IMR-90 (cell line): ENCODE measurements at regions of chr3 and their contacts with region 1.

Region 1: DNA sequence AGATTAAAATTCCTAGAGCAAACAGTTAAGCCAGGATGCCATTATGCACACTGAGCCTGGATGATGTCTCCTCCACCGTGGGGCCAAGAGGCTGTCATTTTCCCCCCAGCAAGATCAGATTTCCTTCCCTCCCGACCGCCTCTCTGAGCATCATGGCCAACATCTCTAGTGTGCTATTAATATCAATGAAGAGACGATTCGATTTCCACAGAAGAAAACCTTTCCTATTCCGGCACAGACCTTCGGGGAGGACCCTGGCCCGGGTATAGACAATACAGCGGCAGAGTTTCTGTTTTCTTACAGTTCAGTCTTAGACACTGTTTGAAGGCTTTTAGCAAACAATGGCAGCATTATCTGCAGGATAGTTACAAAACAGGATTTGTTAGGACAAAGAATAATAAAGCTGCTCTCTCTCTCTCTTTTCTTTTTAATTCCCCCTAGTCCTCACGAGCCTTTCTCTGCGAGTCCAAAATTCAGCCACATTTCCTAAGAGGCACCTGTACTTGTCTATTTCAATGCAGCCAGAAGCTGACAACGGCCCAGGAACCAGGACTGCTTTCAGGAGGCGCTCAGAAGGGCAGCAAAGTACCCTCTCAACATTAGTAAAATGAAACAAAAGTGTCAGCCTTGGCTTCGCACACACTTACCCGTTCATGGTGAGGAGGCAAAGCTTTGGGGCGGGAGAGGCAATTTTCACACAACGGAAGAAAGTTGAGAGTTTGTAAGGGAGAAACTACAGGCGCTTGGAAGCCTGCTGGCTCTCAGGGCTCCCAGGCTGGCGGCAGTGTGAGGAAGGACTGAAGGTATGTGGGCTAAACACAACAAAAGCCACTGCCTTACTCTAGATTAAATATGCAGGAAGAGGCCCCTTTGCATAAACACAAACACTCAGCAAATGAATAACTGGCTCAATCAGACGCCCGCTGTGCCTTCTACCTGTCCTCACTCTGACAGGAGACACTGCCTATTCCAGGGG is 278.0 kb downstream of the FOXP1 start:
- DNase-seq: peak; percentile 57
- ATAC-seq: peak; percentile 71
- H3K4me3 ChIP-seq: peak overlapping the region; percentile 28
- H3K27ac ChIP-seq: peak overlapping the region; percentile 77
- H3K4me1 ChIP-seq: peaks cover 14% of the 10 kb centered on the region
- H3K27me3 ChIP-seq: no peaks in the 10 kb centered on the region
- CTCF ChIP-seq: no peak
- POLR2A ChIP-seq: no peak
- RAD21 ChIP-seq: no peak

Region 2: GRCh38 chr3:70531063-70531657 is 774.4 kb before region 1 on chr3:
- CTCF ChIA-PET with region 1: no interaction called
- POLR2A ChIA-PET with region 1: no interaction called
- dilution Hi-C with region 1: no loop called
- in situ Hi-C with region 1: no loop called
- intact Hi-C with region 1: loop called (anchors 2 kb)
- DNase-seq: peak; percentile 57
- ATAC-seq: peak; percentile 32
- H3K4me3 ChIP-seq: no peak overlapping the region
- H3K27ac ChIP-seq: no peak overlapping the region
- H3K4me1 ChIP-seq: no peaks in the 10 kb centered on the region
- H3K27me3 ChIP-seq: peaks cover 23% of the 10 kb centered on the region
- CTCF ChIP-seq: peak; percentile 74
- POLR2A ChIP-seq: no peak
- RAD21 ChIP-seq: peak; percentile 76

Region 3: DNA sequence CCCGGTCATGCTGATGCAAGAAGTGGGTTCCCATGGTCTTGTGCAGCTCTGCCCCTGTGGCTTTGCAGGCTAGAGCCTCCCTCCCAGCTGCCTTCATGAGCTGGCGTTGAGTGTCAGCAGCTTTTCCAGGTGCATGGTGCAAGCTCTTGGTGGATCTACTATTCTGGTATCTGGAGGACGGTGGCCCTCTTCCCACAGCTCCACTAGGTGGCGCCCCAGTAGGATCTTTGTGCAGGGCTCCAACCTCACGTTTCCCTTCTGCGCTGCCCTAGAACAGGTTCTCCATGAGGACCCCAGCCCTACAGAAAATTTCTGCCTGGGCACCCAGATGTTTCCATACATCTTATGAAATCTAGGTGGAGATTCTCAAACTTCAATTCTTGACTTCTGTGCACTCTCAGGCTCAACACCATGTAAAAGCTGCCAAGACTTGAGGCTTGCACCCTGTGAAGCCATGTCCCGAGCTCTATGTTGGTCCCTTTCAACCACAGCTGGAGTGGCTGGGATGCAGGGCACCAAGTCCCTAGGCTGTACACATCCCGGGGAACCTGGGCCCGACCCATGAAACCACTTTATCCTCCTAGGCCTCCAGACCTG is 754.7 kb before region 1 on chr3:
- CTCF ChIA-PET with region 1: no interaction called
- POLR2A ChIA-PET with region 1: no interaction called
- dilution Hi-C with region 1: no loop called
- in situ Hi-C with region 1: loop called (anchors 10 kb)
- intact Hi-C with region 1: loop called (anchors 1 kb)
- DNase-seq: peak; percentile 54
- ATAC-seq: peak; percentile 93
- H3K4me3 ChIP-seq: no peak overlapping the region
- H3K27ac ChIP-seq: no peak overlapping the region
- H3K4me1 ChIP-seq: no peaks in the 10 kb centered on the region
- H3K27me3 ChIP-seq: peaks cover 5% of the 10 kb centered on the region; the same call in 1 of the 2 replicates
- CTCF ChIP-seq: peak; percentile 67
- POLR2A ChIP-seq: no peak
- RAD21 ChIP-seq: peak; percentile 79

Region 4: DNA sequence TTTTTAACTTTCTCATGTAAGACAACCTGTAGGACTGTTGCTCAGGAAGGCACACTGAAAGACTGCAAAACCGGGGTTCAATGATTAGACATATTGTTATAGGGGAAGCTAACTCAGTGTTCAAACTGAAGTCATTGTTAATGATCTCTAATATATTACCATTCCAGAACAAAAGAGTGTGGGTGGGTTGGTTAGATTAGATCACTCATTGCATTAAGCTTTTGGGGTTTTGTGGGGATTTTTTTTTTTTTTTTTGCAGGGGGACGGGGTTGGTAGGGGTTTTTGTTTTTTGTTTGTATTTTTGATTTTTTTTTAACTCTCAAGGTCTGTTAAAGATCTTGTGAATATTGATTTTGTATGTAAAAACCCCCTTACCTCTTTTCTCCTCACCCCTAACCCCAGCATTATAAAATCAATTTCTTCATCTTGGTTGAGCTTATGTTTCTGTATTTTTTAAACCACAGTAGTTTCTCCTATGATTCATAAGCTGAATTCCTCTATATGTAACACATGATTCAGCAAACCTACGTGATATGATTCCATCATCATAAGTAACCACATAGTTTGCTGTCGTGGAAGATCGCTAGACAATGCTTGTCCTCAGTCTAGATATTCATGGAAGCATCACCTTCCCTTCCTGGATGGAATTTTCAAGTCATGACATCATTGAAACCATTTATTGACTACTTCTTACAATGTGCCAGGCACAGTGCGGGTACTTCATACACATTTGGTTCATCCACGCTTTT is 448.9 kb before region 1 on chr3:
- CTCF ChIA-PET with region 1: no interaction called
- POLR2A ChIA-PET with region 1: no interaction called
- dilution Hi-C with region 1: no loop called
- in situ Hi-C with region 1: no loop called
- intact Hi-C with region 1: no loop called
- DNase-seq: peak; percentile 99
- ATAC-seq: peak; percentile 52
- H3K4me3 ChIP-seq: no peak overlapping the region
- H3K27ac ChIP-seq: no peak overlapping the region
- H3K4me1 ChIP-seq: peaks cover 25% of the 10 kb centered on the region
- H3K27me3 ChIP-seq: no peaks in the 10 kb centered on the region
- CTCF ChIP-seq: no peak
- POLR2A ChIP-seq: no peak
- RAD21 ChIP-seq: no peak

Region 5: GRCh38 chr3:70982700-70983140 is 322.8 kb before region 1 on chr3:
- CTCF ChIA-PET with region 1: no interaction called
- POLR2A ChIA-PET with region 1: no interaction called
- dilution Hi-C with region 1: no loop called
- in situ Hi-C with region 1: no loop called
- intact Hi-C with region 1: loop called (anchors 5 kb)
- DNase-seq: peak; percentile 86
- ATAC-seq: peak; percentile 70
- H3K4me3 ChIP-seq: no peak overlapping the region
- H3K27ac ChIP-seq: peak overlapping the region; percentile 72
- H3K4me1 ChIP-seq: peaks cover 35% of the 10 kb centered on the region
- H3K27me3 ChIP-seq: no peaks in the 10 kb centered on the region
- CTCF ChIP-seq: no peak
- POLR2A ChIP-seq: no peak
- RAD21 ChIP-seq: no peak

Region 6: GRCh38 chr3:71064288-71064955 is 241.1 kb before region 1 on chr3:
- CTCF ChIA-PET with region 1: no interaction called
- POLR2A ChIA-PET with region 1: no interaction called
- dilution Hi-C with region 1: no loop called
- in situ Hi-C with region 1: no loop called
- intact Hi-C with region 1: loop called (anchors 2 kb)
- DNase-seq: peak; percentile 68
- ATAC-seq: peak; percentile 35
- H3K4me3 ChIP-seq: peak overlapping the region; percentile 57
- H3K27ac ChIP-seq: peak overlapping the region; percentile 94
- H3K4me1 ChIP-seq: peaks cover 11% of the 10 kb centered on the region
- H3K27me3 ChIP-seq: no peaks in the 10 kb centered on the region
- CTCF ChIP-seq: no peak
- POLR2A ChIP-seq: peak; percentile 71
- RAD21 ChIP-seq: no peak

Region 7: GRCh38 chr3:71130471-71131374 is 174.8 kb before region 1 on chr3:
- CTCF ChIA-PET with region 1: no interaction called
- POLR2A ChIA-PET with region 1: interaction called, 3 read pairs
- dilution Hi-C with region 1: no loop called
- in situ Hi-C with region 1: loop called (anchors 10 kb)
- intact Hi-C with region 1: loop called (anchors 1 kb)
- DNase-seq: peak; percentile 83
- ATAC-seq: peak; percentile 66
- H3K4me3 ChIP-seq: peak overlapping the region; percentile 64
- H3K27ac ChIP-seq: peak overlapping the region; percentile 99
- H3K4me1 ChIP-seq: peaks cover 11% of the 10 kb centered on the region
- H3K27me3 ChIP-seq: no peaks in the 10 kb centered on the region
- CTCF ChIP-seq: no peak
- POLR2A ChIP-seq: peak; percentile 64; the same call in 1 of the 2 replicates
- RAD21 ChIP-seq: peak; percentile 27; the same call in 1 of the 2 replicates

Region 8: GRCh38 chr3:71681224-71681668 is 375.7 kb after region 1 on chr3:
- CTCF ChIA-PET with region 1: no interaction called
- POLR2A ChIA-PET with region 1: no interaction called
- dilution Hi-C with region 1: no loop called
- in situ Hi-C with region 1: no loop called
- intact Hi-C with region 1: loop called (anchors 5 kb)
- DNase-seq: peak; percentile 83
- ATAC-seq: peak; percentile 79
- H3K4me3 ChIP-seq: no peak overlapping the region
- H3K27ac ChIP-seq: peak overlapping the region; percentile 51; the same call in 1 of the 2 replicates
- H3K4me1 ChIP-seq: peaks cover 12% of the 10 kb centered on the region
- H3K27me3 ChIP-seq: no peaks in the 10 kb centered on the region
- CTCF ChIP-seq: peak; percentile 91
- POLR2A ChIP-seq: no peak
- RAD21 ChIP-seq: peak; percentile 82